Colonic mucosa (tissue), 4 donors: ENCODE measurements at regions of chr5 and their contacts with region 1.

Region 1: DNA sequence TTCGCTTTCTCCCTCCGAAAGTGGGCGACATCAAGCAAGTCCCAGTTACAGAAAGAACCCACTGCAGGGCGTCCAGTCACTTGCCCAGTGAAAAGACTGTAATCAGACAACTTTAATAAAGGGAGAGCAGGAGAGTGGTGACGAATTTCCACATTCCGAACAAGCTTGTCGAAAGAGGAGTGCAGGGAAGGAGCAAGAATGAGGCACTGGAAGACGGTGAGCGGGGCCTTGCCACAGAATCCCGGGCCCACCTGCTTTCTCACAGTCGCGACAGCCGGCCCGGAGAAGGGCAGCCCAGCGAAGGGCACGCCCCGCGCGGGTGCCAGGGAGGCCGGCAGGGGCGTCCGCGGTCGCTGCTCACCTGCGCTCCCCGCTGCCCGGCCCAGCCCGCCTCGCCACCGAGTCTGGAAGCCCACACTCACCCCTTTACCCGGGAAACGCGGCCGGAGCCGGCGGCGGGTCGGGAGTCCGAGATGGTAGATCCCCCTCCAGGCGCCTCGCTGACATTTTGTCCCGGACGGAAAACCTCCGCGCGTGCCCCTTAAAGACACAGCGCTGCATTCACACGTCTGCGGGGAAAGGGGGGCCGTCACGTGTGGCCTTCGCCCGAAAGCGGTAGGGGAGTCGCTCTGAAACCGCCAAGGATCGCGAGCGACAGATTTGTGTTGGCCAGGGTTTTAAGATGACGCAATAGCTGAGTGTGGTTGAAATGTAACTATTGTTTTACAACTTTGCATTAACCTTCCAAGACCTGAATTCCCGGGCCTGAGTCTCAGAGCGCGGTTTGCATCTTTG is at the start of gene ZBED3:
- DNase-seq: peak; percentile 84
- H3K4me3 ChIP-seq: peak within 1 kb of the TSS; percentile 51
- H3K27ac ChIP-seq: peak within 1 kb of the TSS; percentile 71
- H3K4me1 ChIP-seq: peaks cover 4% of the 10 kb centered on the region
- H3K27me3 ChIP-seq: no peaks in the 10 kb centered on the region
- CTCF ChIP-seq: no peak
- total RNA-seq, gene ZBED3: 10.2 to 12.6 TPM

Region 2: GRCh38 chr5:77030097-77031071 is 56.5 kb before region 1 on chr5 and contains the start of gene AGGF1:
- intact Hi-C with region 1: loop called (anchors 5 kb)
- DNase-seq: peak; percentile 97
- H3K4me3 ChIP-seq: peak within 1 kb of the TSS; percentile 82
- H3K27ac ChIP-seq: peak within 1 kb of the TSS; percentile 93
- H3K4me1 ChIP-seq: peaks cover 8% of the 10 kb centered on the region
- H3K27me3 ChIP-seq: no peaks in the 10 kb centered on the region
- CTCF ChIP-seq: no peak
- total RNA-seq, gene AGGF1: 16.9 to 24.6 TPM